ENCODE measurements at regions of chr20 and their contacts with region 1.

Region 1: GRCh38 chr20:19692685-19693119 is 65.4 kb upstream of the RIN2 start:
- DNase-seq: peak; percentile 18 to 89 (median 56)
- ATAC-seq: peak; percentile 56 to 85 (median 80)
- H3K4me3 ChIP-seq: no peak overlapping the region
- H3K27ac ChIP-seq: no peak overlapping the region
- H3K4me1 ChIP-seq: no peaks in the 10 kb centered on the region
- H3K27me3 ChIP-seq: no peaks in the 10 kb centered on the region
- CTCF ChIP-seq: peak; percentile 84 to 91 (median 86)

Region 2: DNA sequence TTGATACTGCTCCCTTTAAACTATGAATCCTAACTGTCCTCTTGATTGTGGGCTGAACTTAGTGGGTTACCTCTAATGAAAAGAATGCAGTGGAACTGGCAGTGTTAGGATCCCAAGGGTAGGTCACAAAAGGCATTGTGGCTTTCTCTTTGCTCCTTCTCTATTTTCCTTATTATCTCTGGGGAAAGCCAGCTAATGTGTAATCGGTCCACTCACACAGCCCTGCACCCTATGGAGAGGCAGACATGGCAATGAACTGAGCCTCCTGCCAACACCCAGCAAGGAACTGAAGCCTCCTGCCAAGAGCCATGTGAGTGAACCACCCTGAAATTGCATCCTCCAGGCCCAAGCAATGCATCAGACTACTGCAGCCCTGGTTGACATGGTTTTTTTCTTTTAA is 1429.0 kb before region 1 on chr20:
- intact Hi-C with region 1: no loop called
- DNase-seq: peak in 1 of 6 donors; percentile 12
- ATAC-seq: peak in 3 of 4 donors; percentile 69 to 85 (median 84)
- H3K4me3 ChIP-seq: no peak overlapping the region
- H3K27ac ChIP-seq: no peak overlapping the region
- H3K4me1 ChIP-seq: no peaks in the 10 kb centered on the region
- H3K27me3 ChIP-seq: no peaks in the 10 kb centered on the region
- CTCF ChIP-seq: no peak

Region 3: DNA sequence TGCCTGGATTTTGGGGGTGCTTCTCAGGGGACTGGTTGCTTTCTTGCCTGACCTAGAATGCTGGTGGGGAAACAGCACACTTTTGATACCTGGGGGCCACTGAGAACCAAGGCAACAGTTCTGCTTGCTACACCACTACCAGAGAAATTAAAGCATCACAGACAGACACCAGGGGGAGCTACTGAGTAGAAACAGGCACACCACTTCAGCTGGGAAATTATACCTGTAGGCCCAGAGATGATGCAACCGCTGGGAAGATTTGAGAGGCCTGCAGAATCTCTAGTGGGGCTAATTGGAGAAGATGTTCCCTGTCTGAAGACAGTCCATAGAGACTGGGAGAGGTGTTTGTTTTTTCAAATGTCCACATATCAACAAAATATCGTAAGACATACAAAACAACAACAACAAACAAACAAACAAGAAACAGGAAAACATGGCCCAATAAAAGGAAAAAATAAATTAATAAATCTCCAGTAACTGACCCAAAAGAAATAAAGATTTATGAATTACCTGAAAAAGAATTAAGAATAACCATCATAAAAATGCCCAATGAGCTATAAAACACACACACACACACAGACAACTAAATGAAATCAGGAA is 64.0 kb before region 1 on chr20:
- intact Hi-C with region 1: no loop called
- DNase-seq: peak in 4 of 6 donors; percentile 32 to 76 (median 60)
- ATAC-seq: peak; percentile 76 to 93 (median 87)
- H3K4me3 ChIP-seq: no peak overlapping the region
- H3K27ac ChIP-seq: no peak overlapping the region
- H3K4me1 ChIP-seq: no peaks in the 10 kb centered on the region
- H3K27me3 ChIP-seq: no peaks in the 10 kb centered on the region
- CTCF ChIP-seq: peak; percentile 33 to 68 (median 52)

Region 4: GRCh38 chr20:19742974-19743639 is 50.4 kb after region 1 on chr20:
- intact Hi-C with region 1: loop called in 1 of 3 experiments (anchors 10 kb)
- DNase-seq: no peak
- ATAC-seq: no peak
- H3K4me3 ChIP-seq: no peak overlapping the region
- H3K27ac ChIP-seq: no peak overlapping the region
- H3K4me1 ChIP-seq: no peaks in the 10 kb centered on the region
- H3K27me3 ChIP-seq: no peaks in the 10 kb centered on the region
- CTCF ChIP-seq: no peak

Region 5: GRCh38 chr20:19802492-19803158 is 109.9 kb after region 1 on chr20:
- intact Hi-C with region 1: loop called in 1 of 3 experiments (anchors 10 kb)
- DNase-seq: peak in 2 of 6 donors; percentile 13 to 58
- ATAC-seq: peak in 3 of 4 donors; percentile 61 to 87 (median 85)
- H3K4me3 ChIP-seq: no peak overlapping the region
- H3K27ac ChIP-seq: peak overlapping the region in 2 of 4 donors; percentile 20 to 60
- H3K4me1 ChIP-seq: peaks cover 6 to 16% (median 7%) of the 10 kb centered on the region in 3 donors
- H3K27me3 ChIP-seq: no peaks in the 10 kb centered on the region
- CTCF ChIP-seq: no peak

Region 6: DNA sequence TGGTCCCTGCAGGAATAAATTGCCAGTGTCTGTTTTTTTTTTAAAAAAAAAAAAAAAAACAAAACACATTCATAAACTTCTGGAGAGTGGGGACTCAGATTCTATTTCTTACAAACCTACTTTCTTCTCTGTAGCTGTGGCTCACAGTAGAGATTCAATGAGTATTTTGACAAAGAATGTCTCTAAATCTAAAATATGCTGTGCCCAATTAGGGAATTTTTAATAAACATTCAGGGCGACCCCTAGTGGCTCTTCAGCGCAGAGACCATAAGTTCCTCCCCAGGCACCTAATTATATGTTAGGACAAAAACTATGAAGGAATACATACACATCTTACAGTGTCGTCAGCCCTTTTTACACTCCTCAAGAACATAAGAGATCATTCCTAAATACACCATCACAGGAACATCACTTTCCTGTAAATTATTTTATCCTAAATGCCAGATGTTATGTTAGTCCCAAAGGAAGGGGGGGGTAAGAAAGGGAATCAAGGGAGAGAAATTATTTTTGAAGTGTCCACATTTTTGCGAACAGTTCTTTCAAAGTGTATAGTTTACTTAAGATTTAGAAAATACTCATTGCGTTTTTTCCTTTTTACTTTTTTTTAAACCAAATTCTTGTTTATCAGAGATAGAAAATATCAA is 302.6 kb after region 1 on chr20:
- intact Hi-C with region 1: loop called in 2 of 3 experiments (anchors 10 kb)
- DNase-seq: no peak
- ATAC-seq: peak in 3 of 4 donors; percentile 35 to 59 (median 42)
- H3K4me3 ChIP-seq: no peak overlapping the region
- H3K27ac ChIP-seq: no peak overlapping the region
- H3K4me1 ChIP-seq: peaks cover 39 to 55% (median 47%) of the 10 kb centered on the region in 3 donors
- H3K27me3 ChIP-seq: no peaks in the 10 kb centered on the region
- CTCF ChIP-seq: peak; percentile 50 to 70 (median 66)

Region 7: DNA sequence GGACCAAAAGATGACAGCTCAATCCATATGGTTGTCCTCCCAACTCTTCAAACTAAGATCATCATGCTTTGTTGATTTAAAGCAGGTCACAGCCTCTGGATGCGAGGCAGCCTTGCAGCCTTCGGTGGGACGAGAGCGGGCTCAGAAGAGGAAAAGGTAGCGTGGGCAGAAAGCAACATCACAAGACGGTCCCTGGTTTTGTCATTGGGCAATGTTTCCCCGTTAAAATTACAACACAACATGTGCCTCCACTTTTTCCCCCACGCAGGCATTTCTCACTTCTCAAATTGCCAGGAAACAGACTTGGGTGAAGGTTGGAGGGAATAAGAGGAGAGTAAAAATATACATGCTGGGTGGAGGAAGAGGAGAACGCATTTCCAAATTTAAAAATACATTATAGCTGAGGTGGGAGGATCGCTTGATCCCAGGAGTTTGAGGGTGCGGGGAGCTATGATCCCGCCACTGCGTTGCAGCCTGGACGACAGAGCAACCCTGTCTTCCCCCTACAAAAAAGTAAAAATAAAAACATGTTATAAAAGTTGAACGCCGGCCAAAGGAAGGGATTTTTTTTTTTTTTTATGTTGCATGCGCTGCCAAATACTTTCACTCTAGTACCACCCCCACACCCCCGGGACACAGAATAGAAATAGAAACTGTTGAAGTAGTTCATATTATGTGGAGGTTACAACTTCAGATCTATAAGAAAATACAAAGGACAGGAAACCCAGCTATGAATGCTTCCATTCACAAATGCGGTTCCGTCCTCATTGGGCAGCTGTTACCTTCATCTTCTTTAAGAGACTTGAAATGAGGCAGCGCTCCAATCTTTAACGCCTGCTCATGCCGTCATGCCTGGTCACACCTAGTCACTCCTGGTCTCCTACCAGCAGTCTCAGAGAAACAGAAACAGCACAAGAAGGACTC is 310.6 kb after region 1 on chr20:
- intact Hi-C with region 1: loop called in 2 of 3 experiments (anchors 10 kb)
- DNase-seq: peak in 2 of 6 donors; percentile 54 to 65
- ATAC-seq: peak; percentile 54 to 68 (median 55)
- H3K4me3 ChIP-seq: peak overlapping the region in 1 of 4 donors; percentile 16
- H3K27ac ChIP-seq: peak overlapping the region in 3 of 4 donors; percentile 17 to 57 (median 55)
- H3K4me1 ChIP-seq: peaks cover 18 to 47% (median 29%) of the 10 kb centered on the region in 3 donors
- H3K27me3 ChIP-seq: no peaks in the 10 kb centered on the region
- CTCF ChIP-seq: no peak